ENCODE measurements at regions of chr1 and their contacts with region 1.

Region 1: GRCh38 chr1:229558571-229559335 is at the start of gene ABCB10:
- DNase-seq: peak; percentile 92
- H3K4me3 Mint-ChIP-seq: peak within 1 kb of the TSS; percentile 88
- H3K27ac Mint-ChIP-seq: peak within 1 kb of the TSS; percentile 79
- H3K4me1 Mint-ChIP-seq: peaks cover 27% of the 10 kb centered on the region
- H3K27me3 Mint-ChIP-seq: no peaks in the 10 kb centered on the region
- total RNA-seq, gene ABCB10: 18.9 to 19.1 TPM

Region 2: GRCh38 chr1:229270547-229271447 is 288.0 kb before region 1 on chr1 and contains the start of gene RAB4A:
- CTCF ChIA-PET with region 1: no interaction called
- intact Hi-C with region 1: loop called (anchors 5 kb)
- DNase-seq: peak; percentile 57
- H3K4me3 Mint-ChIP-seq: peak within 1 kb of the TSS; percentile 86
- H3K27ac Mint-ChIP-seq: peak within 1 kb of the TSS; percentile 75
- H3K4me1 Mint-ChIP-seq: peaks cover 33% of the 10 kb centered on the region
- H3K27me3 Mint-ChIP-seq: no peaks in the 10 kb centered on the region
- total RNA-seq, gene RAB4A: 15.8 to 19.9 TPM

Region 3: GRCh38 chr1:229537894-229538293 is 20.9 kb before region 1 on chr1:
- CTCF ChIA-PET with region 1: no interaction called
- intact Hi-C with region 1: loop called (anchors 1 kb)
- DNase-seq: no peak
- H3K4me3 Mint-ChIP-seq: no peak overlapping the region
- H3K27ac Mint-ChIP-seq: no peak overlapping the region
- H3K4me1 Mint-ChIP-seq: peaks cover 10% of the 10 kb centered on the region
- H3K27me3 Mint-ChIP-seq: no peaks in the 10 kb centered on the region

Region 4: GRCh38 chr1:229625915-229626831 is 67.4 kb after region 1 on chr1 and contains the starts of genes TAF5L and URB2:
- CTCF ChIA-PET with region 1: interaction called, 8 read pairs
- intact Hi-C with region 1: loop called (anchors 1 kb)
- DNase-seq: peak; percentile 85
- H3K4me3 Mint-ChIP-seq: peak within 1 kb of the TSS; percentile 99
- H3K27ac Mint-ChIP-seq: peak within 1 kb of the TSS; percentile 89
- H3K4me1 Mint-ChIP-seq: peaks cover 51% of the 10 kb centered on the region
- H3K27me3 Mint-ChIP-seq: no peaks in the 10 kb centered on the region
- total RNA-seq, gene TAF5L: 10.3 TPM
- total RNA-seq, gene URB2: 9.5 to 10.0 TPM